Activated T-helper 2 cell treated with anti-CD3 and anti-CD28 coated beads, Interferon-gamma antibody, Interleukin-2, Interleukin-4, amounts not matched to agents 10 μg/mL and 5 μg/mL and 100 μg/mL, durations not matched to agents 14 hours and 24 hours and 36 hours (primary cell): ENCODE measurements at regions of chr11 and their contacts with region 1.

Region 1: GRCh38 chr11:37957717-37958116 is 1359.7 kb upstream of the RAG2 start:
- DNase-seq: no peak
- H3K4me3 Mint-ChIP-seq: no peak overlapping the region
- H3K27ac Mint-ChIP-seq: no peak overlapping the region
- H3K4me1 Mint-ChIP-seq: no peaks in the 10 kb centered on the region
- H3K27me3 Mint-ChIP-seq: no peaks in the 10 kb centered on the region

Region 2: GRCh38 chr11:38219636-38220035 is 261.9 kb after region 1 on chr11:
- intact Hi-C with region 1: loop called (anchors 5 kb)
- DNase-seq: no peak
- H3K4me3 Mint-ChIP-seq: no peak overlapping the region
- H3K27ac Mint-ChIP-seq: no peak overlapping the region
- H3K4me1 Mint-ChIP-seq: no peaks in the 10 kb centered on the region
- H3K27me3 Mint-ChIP-seq: no peaks in the 10 kb centered on the region